H1 (cell line): ENCODE measurements at regions of chr17 and their contacts with region 1.

Region 1: DNA sequence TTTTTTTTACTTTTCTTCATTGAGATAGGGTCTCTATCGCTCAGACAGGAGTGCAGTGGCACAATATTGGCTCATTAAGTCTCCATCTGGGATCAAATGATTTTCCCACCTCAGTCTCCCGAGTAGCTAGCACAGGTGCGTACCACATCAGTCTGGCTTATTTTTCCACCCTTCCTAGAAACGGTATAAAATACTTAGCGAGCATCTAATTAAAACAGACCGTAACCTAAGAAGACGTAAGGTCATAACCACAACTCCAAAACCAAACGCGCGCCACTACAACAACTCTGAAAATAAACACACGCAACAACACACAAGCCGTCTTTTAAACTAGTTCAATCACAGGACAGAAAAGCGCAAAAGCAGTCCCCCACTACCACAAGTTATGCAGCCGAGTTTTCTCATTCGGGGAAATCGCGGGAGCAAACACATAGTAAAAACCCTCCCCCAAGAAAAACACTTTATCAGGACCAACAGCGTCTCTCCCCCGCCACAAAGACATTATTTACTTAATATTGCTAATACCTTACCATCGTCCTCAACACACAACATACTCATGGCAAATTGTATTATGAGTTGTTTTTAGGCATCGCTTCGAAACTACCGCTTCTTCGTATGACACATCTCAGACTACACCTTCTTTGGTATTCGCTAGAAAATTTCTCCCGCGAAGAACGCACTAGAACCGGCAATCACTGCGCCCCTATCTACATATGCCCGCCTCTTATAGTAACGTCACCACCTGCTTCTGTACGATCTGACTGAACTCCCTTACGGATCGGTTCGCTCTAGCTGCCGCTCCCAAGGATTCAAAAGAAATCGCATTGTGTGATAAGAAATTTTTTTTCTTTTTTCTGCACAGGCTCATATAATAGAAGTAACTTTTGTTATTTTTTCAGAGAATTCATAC is 32.8 kb downstream of the TEX14 start:
- DNase-seq: peak; percentile 82 to 86
- H3K4me3 ChIP-seq: peak overlapping the region; percentile 29 to 62 (median 39); a peak in 5 of 8 replicates
- H3K27ac ChIP-seq: peak overlapping the region; percentile 98
- H3K4me1 ChIP-seq: peaks cover 0 to 7% (median 1%) of the 10 kb centered on the region in 4 experiments; a peak in 2 of 7 replicates
- H3K27me3 ChIP-seq: no peaks in the 10 kb centered on the region
- CTCF ChIP-seq: no peak
- EP300 ChIP-seq: 0 out of 3 replicates have a peak, but pooled peaks of 1 of the 2 experiments have one; percentile 73
- POLR2A ChIP-seq: peak; percentile 100
- RAD21 ChIP-seq: peak in 1 of 2 experiments; percentile 16; a peak in 1 of 4 replicates

Region 2: GRCh38 chr17:58517734-58518609 is 141.1 kb before region 1 on chr17:
- CTCF ChIA-PET with region 1: interaction called, 7 read pairs
- POLR2A ChIA-PET with region 1: interaction called, 27 read pairs
- DNase-seq: peak; percentile 95 to 100
- H3K4me3 ChIP-seq: peak overlapping the region; percentile 79 to 94 (median 86)
- H3K27ac ChIP-seq: peak overlapping the region; percentile 58
- H3K4me1 ChIP-seq: peaks cover 0 to 17% (median 5%) of the 10 kb centered on the region in 4 experiments; a peak in 5 of 7 replicates
- H3K27me3 ChIP-seq: no peaks in the 10 kb centered on the region
- CTCF ChIP-seq: no peak
- EP300 ChIP-seq: 0 out of 3 replicates have a peak, but pooled peaks of 1 of the 2 experiments have one; percentile 42
- POLR2A ChIP-seq: peak in 1 of 2 experiments; percentile 79; a peak in 1 of 3 replicates
- RAD21 ChIP-seq: no peak

Region 3: GRCh38 chr17:58587702-58588254 is 71.3 kb before region 1 on chr17:
- CTCF ChIA-PET with region 1: interaction called, 5 read pairs
- POLR2A ChIA-PET with region 1: interaction called, 16 read pairs
- DNase-seq: peak; percentile 46 to 70
- H3K4me3 ChIP-seq: no peak overlapping the region
- H3K27ac ChIP-seq: no peak overlapping the region
- H3K4me1 ChIP-seq: no peaks in the 10 kb centered on the region
- H3K27me3 ChIP-seq: no peaks in the 10 kb centered on the region
- CTCF ChIP-seq: peak; percentile 91 to 96 (median 91)
- EP300 ChIP-seq: no peak
- POLR2A ChIP-seq: no peak
- RAD21 ChIP-seq: peak; percentile 92 to 94

Region 4: GRCh38 chr17:58643140-58643539 is 15.9 kb before region 1 on chr17:
- CTCF ChIA-PET with region 1: interaction called, 4 read pairs
- POLR2A ChIA-PET with region 1: interaction called, 55 read pairs
- DNase-seq: no peak
- H3K4me3 ChIP-seq: no peak overlapping the region
- H3K27ac ChIP-seq: no peak overlapping the region
- H3K4me1 ChIP-seq: no peaks in the 10 kb centered on the region
- H3K27me3 ChIP-seq: no peaks in the 10 kb centered on the region
- CTCF ChIP-seq: no peak
- EP300 ChIP-seq: no peak
- POLR2A ChIP-seq: no peak
- RAD21 ChIP-seq: no peak

Region 5: GRCh38 chr17:58679263-58680037 is 20.4 kb after region 1 on chr17:
- CTCF ChIA-PET with region 1: no interaction called
- POLR2A ChIA-PET with region 1: interaction called, 96 read pairs
- DNase-seq: no peak
- H3K4me3 ChIP-seq: no peak overlapping the region
- H3K27ac ChIP-seq: no peak overlapping the region
- H3K4me1 ChIP-seq: no peaks in the 10 kb centered on the region
- H3K27me3 ChIP-seq: no peaks in the 10 kb centered on the region
- CTCF ChIP-seq: no peak
- EP300 ChIP-seq: no peak
- POLR2A ChIP-seq: peak; percentile 96 to 100
- RAD21 ChIP-seq: no peak

Region 6: DNA sequence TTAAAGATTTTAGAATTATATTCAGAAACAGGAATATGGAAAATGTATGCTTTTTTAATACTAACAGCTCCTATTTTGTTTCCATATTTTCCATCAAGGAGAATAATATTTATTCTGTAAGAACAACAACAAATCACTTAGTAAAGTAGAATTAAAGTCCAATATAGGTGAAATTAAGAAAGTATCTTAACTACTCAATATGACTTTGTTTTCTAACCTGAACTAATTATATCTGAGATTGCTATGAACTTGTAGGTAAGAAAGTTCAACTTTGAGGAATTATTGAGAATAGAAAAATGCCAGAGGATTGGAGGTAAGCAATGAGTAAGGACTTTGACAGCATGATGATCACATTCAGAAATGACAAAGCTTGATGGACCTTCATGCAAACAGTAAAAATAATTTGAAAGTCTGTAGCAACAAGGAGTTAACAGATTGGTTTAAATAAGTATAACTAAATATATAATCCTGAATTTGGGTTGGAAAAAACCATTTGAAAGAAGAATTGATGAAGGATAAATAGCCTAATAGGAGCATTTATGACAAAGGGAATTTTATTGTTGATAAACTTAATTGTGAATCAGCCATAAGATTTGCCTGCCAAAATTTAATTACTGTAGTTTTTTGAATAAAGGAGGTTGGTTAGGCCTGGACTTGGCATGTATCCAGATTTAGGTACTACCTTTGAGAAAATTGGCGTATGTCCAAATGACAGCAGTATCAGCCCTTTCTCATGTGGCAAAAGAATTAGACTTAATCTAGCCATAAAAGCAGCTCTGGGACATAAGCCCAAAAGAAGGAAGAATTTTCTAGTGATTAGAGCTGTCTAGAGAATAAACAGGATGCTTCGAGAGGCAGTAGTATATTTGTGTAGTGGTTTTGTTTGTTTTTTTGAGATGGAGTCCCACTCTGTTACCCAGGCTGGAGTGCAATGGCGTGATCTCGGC is 124.0 kb after region 1 on chr17:
- CTCF ChIA-PET with region 1: no interaction called
- POLR2A ChIA-PET with region 1: no interaction called
- DNase-seq: no peak
- H3K4me3 ChIP-seq: no peak overlapping the region
- H3K27ac ChIP-seq: no peak overlapping the region
- H3K4me1 ChIP-seq: no peaks in the 10 kb centered on the region
- H3K27me3 ChIP-seq: no peaks in the 10 kb centered on the region
- CTCF ChIP-seq: no peak
- EP300 ChIP-seq: no peak
- POLR2A ChIP-seq: no peak
- RAD21 ChIP-seq: no peak

Region 7: DNA sequence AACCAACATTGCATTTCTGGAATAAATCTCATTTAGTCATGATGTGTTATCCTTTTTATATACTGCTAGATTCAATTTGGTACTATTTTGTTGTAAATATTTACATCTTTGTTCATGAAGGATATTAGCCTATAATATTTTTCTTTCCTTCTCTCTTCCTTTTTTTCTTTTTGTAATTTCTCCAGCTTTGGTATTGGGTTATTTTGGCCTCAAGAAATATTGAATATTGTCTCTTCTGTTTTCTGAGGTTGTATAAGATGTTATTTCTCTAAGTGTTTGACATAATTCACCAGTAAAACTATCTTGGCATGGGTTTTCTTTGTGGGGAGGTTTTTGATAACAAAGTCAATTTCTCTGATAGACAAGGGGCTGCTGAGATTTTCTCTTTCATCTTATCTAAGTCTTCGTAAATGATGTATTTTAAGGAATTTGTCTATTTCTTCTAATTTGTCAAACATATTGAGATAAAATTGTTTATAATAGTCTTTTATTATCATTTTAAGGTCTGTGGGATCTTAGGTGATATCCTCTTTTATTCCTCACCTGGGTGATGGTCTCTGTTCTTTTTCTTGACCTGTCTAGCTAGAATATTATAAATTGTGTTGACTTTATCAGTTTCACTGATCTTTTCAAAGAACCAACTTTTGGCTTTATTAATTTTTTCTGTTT is 141.3 kb after region 1 on chr17:
- CTCF ChIA-PET with region 1: no interaction called
- POLR2A ChIA-PET with region 1: no interaction called
- DNase-seq: no peak
- H3K4me3 ChIP-seq: no peak overlapping the region
- H3K27ac ChIP-seq: no peak overlapping the region
- H3K4me1 ChIP-seq: no peaks in the 10 kb centered on the region
- H3K27me3 ChIP-seq: no peaks in the 10 kb centered on the region
- CTCF ChIP-seq: no peak
- EP300 ChIP-seq: no peak
- POLR2A ChIP-seq: no peak
- RAD21 ChIP-seq: no peak

Region 8: GRCh38 chr17:58822473-58823270 is 163.6 kb after region 1 on chr17:
- CTCF ChIA-PET with region 1: no interaction called
- POLR2A ChIA-PET with region 1: no interaction called
- DNase-seq: no peak
- H3K4me3 ChIP-seq: no peak overlapping the region
- H3K27ac ChIP-seq: no peak overlapping the region
- H3K4me1 ChIP-seq: no peaks in the 10 kb centered on the region
- H3K27me3 ChIP-seq: no peaks in the 10 kb centered on the region
- CTCF ChIP-seq: no peak
- EP300 ChIP-seq: no peak
- POLR2A ChIP-seq: no peak
- RAD21 ChIP-seq: no peak